Activated CD8-positive, alpha-beta memory T cell treated with anti-CD3 and anti-CD28 coated beads, Interleukin-2, amount 10 ng/mL, durations not matched to agents 7 days and 5 days (primary cell): ENCODE measurements at regions of chr16 and their contacts with region 1.

Region 1: GRCh38 chr16:84726079-84726668 is 26.4 kb downstream of the USP10 start:
- DNase-seq: peak; percentile 86
- ATAC-seq: peak; percentile 72
- H3K4me3 Mint-ChIP-seq: peak overlapping the region; percentile 52
- H3K27ac Mint-ChIP-seq: no peak overlapping the region
- H3K4me1 Mint-ChIP-seq: peaks cover 72% of the 10 kb centered on the region
- H3K27me3 Mint-ChIP-seq: no peaks in the 10 kb centered on the region

Region 2: GRCh38 chr16:84629580-84629979 is 96.6 kb before region 1 on chr16:
- CTCF ChIA-PET with region 1: interaction called, 11 read pairs
- DNase-seq: no peak
- ATAC-seq: no peak
- H3K4me3 Mint-ChIP-seq: no peak overlapping the region
- H3K27ac Mint-ChIP-seq: no peak overlapping the region
- H3K4me1 Mint-ChIP-seq: peaks cover 22% of the 10 kb centered on the region
- H3K27me3 Mint-ChIP-seq: peaks cover 51% of the 10 kb centered on the region

Region 3: GRCh38 chr16:84672276-84673202 is 53.6 kb before region 1 on chr16:
- CTCF ChIA-PET with region 1: interaction called, 76 read pairs
- DNase-seq: peak; percentile 86
- ATAC-seq: peak; percentile 88
- H3K4me3 Mint-ChIP-seq: no peak overlapping the region
- H3K27ac Mint-ChIP-seq: no peak overlapping the region
- H3K4me1 Mint-ChIP-seq: peaks cover 8% of the 10 kb centered on the region
- H3K27me3 Mint-ChIP-seq: peaks cover 15% of the 10 kb centered on the region

Region 4: DNA sequence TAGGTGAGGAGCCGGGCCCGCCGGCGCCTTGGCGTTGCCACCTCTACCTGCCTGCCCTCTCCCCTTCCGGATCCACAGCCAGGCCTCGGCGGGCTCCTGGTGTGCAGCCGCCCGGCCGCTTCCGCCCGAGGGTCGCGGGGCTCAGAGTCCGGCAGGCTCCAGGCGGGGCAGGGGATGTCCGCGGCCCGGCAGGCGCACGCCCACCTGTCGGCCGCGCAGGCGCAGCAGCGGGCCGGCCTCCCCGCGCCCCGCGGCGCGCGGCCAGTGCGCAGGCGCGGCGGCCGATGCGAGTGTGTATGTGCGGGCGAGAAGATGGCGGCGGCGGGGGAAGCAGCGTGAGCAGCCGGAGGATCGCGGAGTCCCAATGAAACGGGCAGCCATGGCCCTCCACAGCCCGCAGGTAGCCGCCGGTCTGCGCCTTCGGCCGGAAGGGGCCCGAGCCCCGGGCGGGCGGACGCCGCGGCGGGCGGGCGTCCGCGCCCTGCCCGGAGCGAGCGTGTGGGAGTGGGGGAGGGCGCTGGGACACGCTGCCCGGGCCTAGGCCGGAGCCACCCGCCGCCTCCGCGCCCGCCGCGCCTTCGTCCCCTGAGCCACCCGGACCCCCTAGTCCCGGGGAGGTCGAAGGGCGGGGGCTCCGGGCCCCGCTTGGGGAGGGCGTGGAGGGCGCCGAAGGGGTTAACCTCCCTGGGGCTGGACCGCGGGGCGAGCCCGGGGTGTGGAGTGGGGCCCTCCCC is 26.3 kb before region 1 on chr16 and contains the start of gene USP10:
- CTCF ChIA-PET with region 1: interaction called, 40 read pairs
- DNase-seq: peak; percentile 85
- ATAC-seq: peak; percentile 90
- H3K4me3 Mint-ChIP-seq: peak within 1 kb of the TSS; percentile 98
- H3K27ac Mint-ChIP-seq: peak within 1 kb of the TSS; percentile 96
- H3K4me1 Mint-ChIP-seq: peaks cover 40% of the 10 kb centered on the region
- H3K27me3 Mint-ChIP-seq: no peaks in the 10 kb centered on the region
- total RNA-seq, gene USP10: 90.9 to 117 TPM